Caco-2 (cell line): ENCODE measurements at regions of chr1 and their contacts with region 1.

Region 1: GRCh38 chr1:70410604-70411359 is at the start of gene CTH:
- DNase-seq: peak; percentile 93 to 95
- H3K4me3 ChIP-seq: peak within 1 kb of the TSS; percentile 70
- H3K4me3 Mint-ChIP-seq: peak within 1 kb of the TSS; percentile 93
- H3K27ac Mint-ChIP-seq: peak within 1 kb of the TSS; percentile 92
- H3K4me1 ChIP-seq: no peaks in the 10 kb centered on the region
- H3K4me1 Mint-ChIP-seq: no peaks in the 10 kb centered on the region
- H3K27me3 ChIP-seq: no peaks in the 10 kb centered on the region
- H3K27me3 Mint-ChIP-seq: no peaks in the 10 kb centered on the region
- CTCF ChIP-seq: no peak
- total RNA-seq, gene CTH: 11.1 and 14.0 TPM in 2 replicates

Region 2: DNA sequence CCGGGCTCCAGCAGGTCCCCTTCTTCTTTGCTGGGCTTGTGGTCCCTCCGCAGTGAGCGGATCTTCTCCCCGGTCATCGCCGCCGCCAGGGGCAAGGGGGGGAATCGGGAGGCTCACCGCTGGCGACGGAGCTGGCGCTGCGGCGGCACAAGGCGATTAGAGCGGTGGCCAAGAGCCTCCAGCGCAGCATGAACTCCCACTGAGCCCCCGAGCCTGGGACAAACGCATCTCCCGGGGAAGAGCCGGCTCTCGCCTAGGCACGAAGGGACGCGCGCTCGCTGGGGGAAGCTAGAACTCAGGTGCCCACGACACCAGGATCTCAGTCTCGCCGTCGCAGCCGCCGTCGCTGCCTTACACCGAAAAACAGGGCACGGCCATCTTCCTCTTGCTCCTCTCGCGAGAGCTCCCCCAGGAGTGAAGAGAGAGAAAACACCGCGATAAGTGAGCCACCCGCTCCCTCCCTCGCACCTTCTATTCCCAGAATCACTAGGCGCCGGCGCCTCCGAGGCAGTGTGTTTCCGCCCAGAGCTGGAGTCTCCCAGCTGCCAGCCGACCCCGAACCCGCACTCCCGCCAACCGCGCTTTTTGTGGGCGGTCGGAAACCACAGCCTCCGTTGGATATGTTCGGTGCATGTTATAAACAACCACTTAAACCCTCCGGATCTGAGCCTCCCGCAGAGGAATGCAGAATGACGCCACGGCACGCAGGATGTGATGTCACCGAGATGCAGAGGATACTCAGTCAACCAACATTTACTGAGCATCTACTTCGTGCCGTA is 56.3 kb before region 1 on chr1 and contains the start of gene ANKRD13C:
- CTCF ChIA-PET with region 1: interaction called, 3 read pairs
- POLR2A ChIA-PET with region 1: interaction called, 36 read pairs
- intact Hi-C with region 1: loop called (anchors 1 kb)
- DNase-seq: peak; percentile 90 to 93
- H3K4me3 ChIP-seq: peak within 1 kb of the TSS; percentile 94
- H3K4me3 Mint-ChIP-seq: peak within 1 kb of the TSS; percentile 84
- H3K27ac Mint-ChIP-seq: peak within 1 kb of the TSS; percentile 94
- H3K4me1 ChIP-seq: 0 out of 2 replicates have a peak, but pooled peaks cover 8% of the 10 kb centered on the region
- H3K4me1 Mint-ChIP-seq: peaks cover 14% of the 10 kb centered on the region
- H3K27me3 ChIP-seq: no peaks in the 10 kb centered on the region
- H3K27me3 Mint-ChIP-seq: no peaks in the 10 kb centered on the region
- CTCF ChIP-seq: no peak
- total RNA-seq, gene ANKRD13C: 13.1 and 14.4 TPM in 2 replicates

Region 3: GRCh38 chr1:70382682-70383081 is 28.1 kb before region 1 on chr1:
- CTCF ChIA-PET with region 1: no interaction called
- POLR2A ChIA-PET with region 1: no interaction called
- intact Hi-C with region 1: no loop called
- DNase-seq: no peak
- H3K4me3 ChIP-seq: no peak overlapping the region
- H3K4me3 Mint-ChIP-seq: no peak overlapping the region
- H3K27ac Mint-ChIP-seq: no peak overlapping the region
- H3K4me1 ChIP-seq: no peaks in the 10 kb centered on the region
- H3K4me1 Mint-ChIP-seq: no peaks in the 10 kb centered on the region
- H3K27me3 ChIP-seq: no peaks in the 10 kb centered on the region
- H3K27me3 Mint-ChIP-seq: no peaks in the 10 kb centered on the region
- CTCF ChIP-seq: no peak